Posterior cingulate gyrus (tissue), 11 donors: ENCODE measurements at regions of chr1 and their contacts with region 1.

Region 1: DNA sequence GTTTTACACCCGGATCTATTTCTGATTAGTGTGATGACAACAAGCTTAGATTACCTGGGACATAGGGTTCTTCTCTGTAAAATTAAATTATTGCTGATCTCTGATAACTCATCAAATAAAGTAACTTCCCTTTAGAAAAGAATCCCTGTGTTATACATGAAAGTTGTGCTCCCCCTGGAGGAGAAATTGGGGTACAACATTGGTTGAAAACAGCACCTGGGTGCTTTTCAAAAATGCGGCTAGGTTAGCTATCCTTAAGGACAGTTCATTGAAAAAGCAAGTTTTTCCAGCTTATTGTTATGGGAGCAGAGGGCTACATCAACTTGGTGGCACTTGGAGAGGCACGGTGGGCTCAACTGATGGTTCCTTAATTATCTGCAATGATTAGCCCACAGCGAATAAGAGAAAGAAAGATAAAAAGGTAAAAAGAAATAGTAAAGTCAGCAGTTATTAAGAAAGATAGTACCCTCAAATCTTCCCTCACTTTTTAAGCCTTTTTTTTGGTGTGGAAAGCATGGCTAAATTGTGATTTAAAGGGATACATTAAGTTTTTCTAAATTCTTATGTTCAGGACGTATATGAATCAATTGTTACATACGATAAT is 97.8 kb downstream of the FMN2 start:
- DNase-seq: no peak

Region 2: DNA sequence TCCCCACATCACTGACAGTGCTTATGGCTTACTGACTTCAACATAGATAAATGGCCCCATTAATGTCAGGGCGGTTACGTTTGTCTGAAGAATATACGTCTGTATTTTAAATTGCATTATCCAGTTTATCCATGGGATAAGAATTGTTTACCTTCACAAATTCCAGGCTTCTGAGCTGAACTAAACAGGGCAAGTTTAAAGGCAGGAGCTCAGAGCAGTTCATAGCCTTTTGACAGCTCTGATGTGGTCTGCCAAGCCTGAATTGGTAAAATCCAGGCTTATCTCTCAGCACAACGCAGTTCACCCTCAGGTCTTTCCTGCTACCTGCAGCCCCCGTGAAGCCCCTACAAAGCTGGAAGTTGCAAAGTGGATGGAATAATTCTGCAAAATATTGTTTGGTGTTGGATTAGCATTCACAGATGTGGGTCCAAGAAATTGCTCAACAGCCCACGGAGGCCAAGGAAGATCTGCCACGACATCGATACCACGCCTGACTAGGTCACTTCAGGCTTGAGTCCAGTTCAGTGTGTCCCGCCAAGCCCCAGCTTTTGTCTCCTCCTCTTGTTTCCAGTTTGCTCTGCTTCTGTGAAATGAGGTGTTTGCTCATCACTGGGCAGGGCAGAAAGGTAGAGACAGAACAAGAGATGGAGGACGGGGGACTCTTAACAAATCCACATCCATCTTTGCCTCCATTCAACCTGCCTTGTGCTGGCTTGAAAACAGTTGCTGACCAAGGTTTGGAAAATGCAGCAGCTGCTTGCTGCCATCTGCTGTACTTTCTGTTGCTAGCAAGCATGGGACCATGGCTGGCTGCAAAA is 502.2 kb after region 1 on chr1:
- intact Hi-C with region 1: loop called (anchors 1 kb)
- DNase-seq: peak in 8 of 10 donors; percentile 21 to 90 (median 42)